ENCODE measurements at regions of chr17 and their contacts with region 1.

Region 1: GRCh38 chr17:1197781-1198490 is 18.2 kb upstream of the ABR start:
- DNase-seq: no peak
- H3K4me3 ChIP-seq: no peak overlapping the region
- H3K27ac ChIP-seq: peak overlapping the region; percentile 31
- H3K27me3 ChIP-seq: peaks cover 9% of the 10 kb centered on the region
- CTCF ChIP-seq: no peak

Region 2: DNA sequence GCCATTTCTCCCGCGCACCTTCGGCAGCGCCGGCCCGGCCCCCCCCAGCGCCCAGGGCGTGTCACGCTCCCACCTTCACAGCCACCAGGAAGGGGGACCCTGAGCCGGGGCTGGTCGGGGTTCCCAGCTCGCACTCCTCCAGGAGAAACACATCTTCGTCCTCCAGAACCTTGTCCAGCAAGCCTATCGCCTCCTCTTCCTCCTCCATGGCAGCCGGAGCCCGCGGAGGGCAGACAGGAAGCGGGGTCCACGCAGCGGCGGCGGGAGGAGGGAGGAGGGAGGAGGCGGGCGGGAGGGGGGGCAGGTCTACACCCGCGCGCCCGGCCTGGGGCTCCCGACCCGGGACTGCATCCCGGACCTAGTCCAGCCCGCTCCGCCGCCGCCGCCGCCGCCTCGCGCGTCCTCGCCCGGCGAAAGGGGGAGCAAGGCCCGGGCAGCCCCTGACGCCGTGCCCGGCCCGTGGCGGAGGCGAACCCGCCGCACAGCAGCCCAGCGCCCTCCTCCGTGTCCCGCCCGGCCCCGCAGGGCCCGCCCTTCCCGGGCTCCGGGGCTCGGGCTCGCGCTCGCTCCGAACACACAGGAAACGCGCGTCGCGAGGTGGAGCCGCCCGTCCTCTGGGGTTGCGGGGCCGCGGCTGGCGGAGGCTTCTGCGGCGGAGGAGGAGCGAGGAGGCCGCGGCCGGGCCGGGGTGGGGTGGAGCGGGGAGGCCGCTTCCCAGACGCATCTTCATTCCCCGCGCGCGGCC is 88.9 kb before region 1 on chr17:
- CTCF ChIA-PET with region 1: no interaction called
- POLR2A ChIA-PET with region 1: no interaction called
- DNase-seq: no peak
- H3K4me3 ChIP-seq: peak overlapping the region; percentile 69
- H3K27ac ChIP-seq: no peak overlapping the region
- H3K27me3 ChIP-seq: no peaks in the 10 kb centered on the region
- CTCF ChIP-seq: no peak

Region 3: DNA sequence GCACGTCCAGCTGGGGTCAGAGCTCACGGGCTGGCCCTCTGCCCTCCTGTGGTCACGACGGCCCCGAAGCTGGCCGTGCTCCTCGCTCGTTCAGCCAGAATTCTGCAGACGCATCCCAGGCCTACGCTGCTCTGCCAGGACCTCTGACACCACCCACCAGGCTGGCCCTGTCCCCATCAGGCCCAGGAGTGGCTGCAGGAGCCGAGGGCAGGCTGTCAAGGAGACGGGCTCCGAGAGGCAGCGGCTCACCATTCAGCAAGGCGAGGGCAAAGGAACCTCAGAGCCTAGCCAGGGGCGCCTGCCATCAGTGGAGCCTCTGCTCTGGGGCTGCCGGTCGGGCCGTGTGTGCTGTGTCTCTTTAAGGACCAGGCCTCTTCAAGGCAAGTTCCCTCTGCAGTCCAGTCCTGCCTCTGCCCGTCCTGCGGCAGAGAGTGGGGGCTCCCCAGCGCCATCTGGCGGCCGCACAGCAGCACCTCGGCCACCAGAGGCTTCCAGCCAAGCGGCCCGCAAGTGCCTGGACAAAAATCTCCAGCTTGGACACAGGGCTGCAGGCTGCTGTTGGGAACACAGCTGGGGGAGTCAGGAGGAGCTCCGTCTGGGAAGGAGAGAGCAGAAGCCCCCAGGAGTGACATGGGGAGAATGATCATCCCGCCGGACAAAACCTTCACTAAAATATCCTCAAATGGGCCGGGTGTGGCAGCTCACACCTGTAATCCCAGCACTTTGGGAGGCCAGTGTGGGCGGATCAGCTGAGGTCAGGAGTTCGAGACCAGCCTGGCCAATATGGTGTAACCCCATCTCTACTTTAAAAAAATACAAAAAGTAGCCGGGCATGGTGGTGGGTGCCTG is 10.8 kb before region 1 on chr17:
- CTCF ChIA-PET with region 1: interaction called, 32 read pairs
- POLR2A ChIA-PET with region 1: no interaction called
- DNase-seq: peak; percentile 79
- H3K4me3 ChIP-seq: peak overlapping the region; percentile 27
- H3K27ac ChIP-seq: no peak overlapping the region
- H3K27me3 ChIP-seq: peaks cover 17% of the 10 kb centered on the region
- CTCF ChIP-seq: peak; percentile 100